GM12878 (cell line): ENCODE measurements at regions of chr6 and their contacts with region 1.

Region 1: GRCh38 chr6:36094753-36095496 is 35.4 kb upstream of the MAPK13 start:
- DNase-seq: peak; percentile 33
- ATAC-seq: peak; percentile 100
- H3K4me3 ChIP-seq: no peak overlapping the region
- H3K27ac ChIP-seq: peak overlapping the region; percentile 28; the same call in 1 of the 2 replicates
- H3K4me1 ChIP-seq: peaks cover 7% of the 10 kb centered on the region; the same call in 1 of the 2 replicates
- H3K27me3 ChIP-seq: no peaks in the 10 kb centered on the region
- CTCF ChIP-seq: peak; percentile 86 to 95 (median 93); a peak in 5 of 6 replicates
- EP300 ChIP-seq: no peak
- POLR2A ChIP-seq: no peak
- RAD21 ChIP-seq: peak; percentile 95

Region 2: GRCh38 chr6:36033935-36034334 is 61.0 kb before region 1 on chr6:
- CTCF ChIA-PET with region 1: interaction called, 165 read pairs
- POLR2A ChIA-PET with region 1: interaction called, 27 read pairs
- RAD21 ChIA-PET with region 1: interaction called, 140 read pairs
- SMC1A ChIA-PET with region 1: interaction called, 167 read pairs
- in situ Hi-C with region 1: loop called (anchors 5 kb)
- intact Hi-C with region 1: no loop called
- DNase-seq: no peak
- ATAC-seq: peak; percentile 55
- H3K4me3 ChIP-seq: peak overlapping the region; percentile 9; the same call in 1 of the 2 replicates
- H3K27ac ChIP-seq: peak overlapping the region; percentile 27
- H3K4me1 ChIP-seq: peaks cover 16% of the 10 kb centered on the region
- H3K27me3 ChIP-seq: no peaks in the 10 kb centered on the region
- CTCF ChIP-seq: no peak
- EP300 ChIP-seq: no peak
- POLR2A ChIP-seq: no peak
- RAD21 ChIP-seq: no peak

Region 3: DNA sequence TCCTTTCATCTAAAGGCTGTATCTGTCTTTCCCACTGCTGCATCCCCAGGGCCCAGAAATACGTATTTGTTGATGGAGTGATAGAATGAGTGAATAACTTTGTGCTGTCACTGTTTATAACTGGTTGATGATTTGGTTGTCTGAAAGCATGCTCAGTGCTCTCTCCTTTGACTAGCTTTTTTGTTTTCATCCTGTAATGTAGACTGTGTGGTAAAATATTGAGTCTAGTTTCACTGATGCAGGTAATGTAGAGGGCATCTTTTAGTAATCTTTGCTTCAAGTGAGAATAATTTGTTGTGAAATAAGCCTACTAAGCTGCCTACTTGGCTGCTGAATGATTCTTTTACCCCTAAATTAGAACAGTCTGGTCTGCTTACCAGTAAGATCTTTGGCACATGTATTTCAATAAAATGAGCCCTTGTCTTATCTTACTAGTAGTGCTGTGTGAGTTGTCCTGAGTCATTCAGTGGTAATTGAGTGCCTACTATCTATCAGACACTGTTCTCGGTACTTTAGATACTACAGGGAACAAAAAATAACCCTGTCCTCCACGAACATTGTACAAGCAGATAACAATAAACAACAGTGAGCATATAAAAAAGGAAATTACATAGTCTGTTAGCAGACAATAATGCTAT is 27.4 kb before region 1 on chr6:
- CTCF ChIA-PET with region 1: interaction called, 24 read pairs
- POLR2A ChIA-PET with region 1: no interaction called
- RAD21 ChIA-PET with region 1: interaction called, 4 read pairs
- SMC1A ChIA-PET with region 1: interaction called, 3 read pairs
- in situ Hi-C with region 1: no loop called
- intact Hi-C with region 1: no loop called
- DNase-seq: no peak
- ATAC-seq: peak; percentile 26; the same call in 2 of the 3 replicates
- H3K4me3 ChIP-seq: no peak overlapping the region
- H3K27ac ChIP-seq: no peak overlapping the region
- H3K4me1 ChIP-seq: peaks cover 3% of the 10 kb centered on the region; the same call in 1 of the 2 replicates
- H3K27me3 ChIP-seq: no peaks in the 10 kb centered on the region
- CTCF ChIP-seq: no peak
- EP300 ChIP-seq: no peak
- POLR2A ChIP-seq: no peak
- RAD21 ChIP-seq: no peak

Region 4: DNA sequence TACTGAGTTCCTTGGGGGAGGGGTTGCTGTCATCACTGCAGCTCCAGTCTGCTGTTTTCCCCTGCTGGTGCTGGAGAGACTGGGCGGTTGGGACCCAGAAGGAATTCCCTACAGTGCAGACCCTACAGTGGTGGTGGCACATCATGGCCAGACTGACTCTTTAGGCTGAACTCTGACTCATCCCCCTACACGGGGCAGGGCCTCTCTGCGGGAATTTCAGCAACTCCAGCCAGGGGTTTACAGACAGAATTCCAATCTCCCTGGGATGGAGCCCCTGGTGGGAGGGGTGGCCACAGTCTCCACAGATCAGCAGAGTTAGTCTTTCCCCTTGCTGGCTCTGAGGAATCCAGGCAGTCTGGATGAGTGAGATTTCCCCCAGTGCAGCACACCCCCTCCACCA is 11.5 kb before region 1 on chr6:
- CTCF ChIA-PET with region 1: interaction called, 33 read pairs
- POLR2A ChIA-PET with region 1: no interaction called
- RAD21 ChIA-PET with region 1: interaction called, 7 read pairs
- SMC1A ChIA-PET with region 1: interaction called, 26 read pairs
- in situ Hi-C with region 1: no loop called
- intact Hi-C with region 1: no loop called
- DNase-seq: no peak
- ATAC-seq: no peak
- H3K4me3 ChIP-seq: no peak overlapping the region
- H3K27ac ChIP-seq: no peak overlapping the region
- H3K4me1 ChIP-seq: no peaks in the 10 kb centered on the region
- H3K27me3 ChIP-seq: no peaks in the 10 kb centered on the region
- CTCF ChIP-seq: no peak
- EP300 ChIP-seq: no peak
- POLR2A ChIP-seq: no peak
- RAD21 ChIP-seq: no peak

Region 5: GRCh38 chr6:36123257-36124139 is 28.6 kb after region 1 on chr6:
- CTCF ChIA-PET with region 1: interaction called, 38 read pairs
- POLR2A ChIA-PET with region 1: no interaction called
- RAD21 ChIA-PET with region 1: interaction called, 12 read pairs
- SMC1A ChIA-PET with region 1: interaction called, 8 read pairs
- in situ Hi-C with region 1: no loop called
- intact Hi-C with region 1: no loop called
- DNase-seq: no peak
- ATAC-seq: peak; percentile 92
- H3K4me3 ChIP-seq: no peak overlapping the region
- H3K27ac ChIP-seq: no peak overlapping the region
- H3K4me1 ChIP-seq: peaks cover 26% of the 10 kb centered on the region
- H3K27me3 ChIP-seq: no peaks in the 10 kb centered on the region
- CTCF ChIP-seq: peak; percentile 75 to 93 (median 91)
- EP300 ChIP-seq: 0 out of 4 replicates have a peak, but pooled peaks of 1 of the 2 experiments have one; percentile 26
- POLR2A ChIP-seq: no peak
- RAD21 ChIP-seq: peak; percentile 92

Region 6: DNA sequence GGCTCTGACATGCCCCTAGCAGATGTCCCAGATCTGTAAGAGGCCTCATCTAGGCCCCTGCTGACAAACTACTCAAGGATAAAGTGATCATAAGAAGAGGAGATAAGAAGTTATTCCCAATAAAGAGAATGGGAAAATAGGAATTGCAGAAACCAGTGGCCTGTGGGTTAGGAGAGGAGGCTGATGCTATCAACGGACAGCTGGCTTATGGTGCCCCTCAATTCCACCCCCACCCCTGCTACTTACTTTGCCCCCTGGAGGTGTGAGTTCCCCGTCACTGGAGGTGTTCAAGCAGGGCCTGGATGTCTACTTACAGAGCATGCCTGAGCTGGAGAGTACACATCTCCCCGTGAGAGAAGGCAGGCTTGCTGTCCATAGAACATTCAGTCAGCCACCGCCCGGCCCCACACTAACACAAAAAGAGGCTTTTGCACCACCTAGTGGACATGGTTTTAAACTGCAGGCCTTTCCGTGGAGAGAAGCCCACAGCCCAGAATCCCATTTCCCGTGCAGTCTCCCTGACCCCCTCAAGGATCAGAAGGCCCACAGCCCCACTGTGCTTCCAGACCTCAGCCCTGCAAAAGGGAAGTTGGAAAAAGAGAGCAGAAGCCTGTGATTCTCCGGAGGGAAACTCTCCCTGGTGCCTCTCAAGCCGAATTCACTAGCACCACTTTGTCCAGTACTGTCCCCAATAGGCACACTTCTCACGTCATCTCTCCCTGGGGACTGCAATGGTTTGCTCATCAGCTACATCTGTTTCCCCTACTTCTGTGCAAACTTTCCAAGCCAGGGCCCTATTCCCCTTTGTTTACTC is 265.5 kb after region 1 on chr6:
- CTCF ChIA-PET with region 1: interaction called, 13 read pairs
- POLR2A ChIA-PET with region 1: no interaction called
- RAD21 ChIA-PET with region 1: interaction called, 8 read pairs
- SMC1A ChIA-PET with region 1: interaction called, 5 read pairs
- in situ Hi-C with region 1: no loop called
- intact Hi-C with region 1: no loop called
- DNase-seq: no peak
- ATAC-seq: peak; percentile 65
- H3K4me3 ChIP-seq: no peak overlapping the region
- H3K27ac ChIP-seq: no peak overlapping the region
- H3K4me1 ChIP-seq: peaks cover 36% of the 10 kb centered on the region
- H3K27me3 ChIP-seq: no peaks in the 10 kb centered on the region
- CTCF ChIP-seq: peak; percentile 78 to 93 (median 81)
- EP300 ChIP-seq: peak in 1 of 2 experiments; percentile 16; a peak in 1 of 4 replicates
- POLR2A ChIP-seq: no peak
- RAD21 ChIP-seq: peak; percentile 94